ENCODE measurements at regions of chr5 and their contacts with region 1.

Region 1: GRCh38 chr5:79464695-79465332 is 49.1 kb downstream of the HOMER1 start:
- DNase-seq: peak in 1 of 4 donors; percentile 15
- ATAC-seq: peak; percentile 83
- H3K4me3 ChIP-seq: no peak overlapping the region
- H3K27ac ChIP-seq: no peak overlapping the region
- H3K4me1 ChIP-seq: no peaks in the 10 kb centered on the region
- H3K27me3 ChIP-seq: no peaks in the 10 kb centered on the region
- CTCF ChIP-seq: peak; percentile 20 to 49

Region 2: DNA sequence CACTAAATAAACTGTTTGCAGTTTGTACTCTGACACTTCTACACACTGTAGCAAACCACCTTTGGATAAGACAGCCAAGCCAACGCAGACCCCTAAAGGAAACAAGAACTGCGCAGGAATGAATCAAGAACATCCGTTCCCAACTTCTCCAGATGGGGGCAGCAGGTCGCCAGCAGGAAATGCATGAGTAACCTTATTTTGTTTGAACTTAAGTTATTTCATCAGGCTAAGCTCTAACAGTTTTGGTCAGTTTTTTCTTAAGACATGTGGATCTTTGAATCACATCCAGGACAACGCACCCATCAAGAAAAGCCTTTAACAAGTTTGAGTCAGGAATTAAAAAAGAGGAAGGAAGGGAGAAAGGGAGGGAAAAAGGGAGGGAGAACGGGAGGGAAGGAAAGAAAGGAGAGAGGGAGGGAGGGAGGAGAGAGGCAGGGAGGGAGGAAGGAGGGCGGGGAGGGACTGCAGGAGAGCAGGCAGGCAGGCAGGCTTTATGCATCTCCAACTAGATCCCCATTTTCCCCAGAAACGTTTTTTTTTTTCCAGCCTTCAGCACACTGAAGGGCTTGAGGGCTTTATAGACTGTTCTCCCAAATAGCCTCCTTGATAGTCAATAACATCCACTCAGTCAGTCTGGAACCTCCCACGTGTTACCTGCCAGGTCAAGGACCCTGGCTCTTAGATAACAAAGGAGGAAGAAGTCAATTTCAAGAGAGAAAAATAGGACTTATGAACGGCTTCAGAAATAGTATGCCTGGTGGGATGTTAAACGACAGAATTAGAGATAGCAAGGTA is 331.0 kb before region 1 on chr5:
- intact Hi-C with region 1: loop called in 1 of 2 experiments (anchors 10 kb)
- DNase-seq: peak in 3 of 4 donors; percentile 45 to 79 (median 71)
- ATAC-seq: peak; percentile 95
- H3K4me3 ChIP-seq: peak overlapping the region in 1 of 2 donors; percentile 7
- H3K27ac ChIP-seq: peak overlapping the region in 1 of 2 donors; percentile 18
- H3K4me1 ChIP-seq: peaks cover 5 to 10% of the 10 kb centered on the region in 2 donors
- H3K27me3 ChIP-seq: no peaks in the 10 kb centered on the region
- CTCF ChIP-seq: peak in 1 of 2 donors; percentile 68

Region 3: DNA sequence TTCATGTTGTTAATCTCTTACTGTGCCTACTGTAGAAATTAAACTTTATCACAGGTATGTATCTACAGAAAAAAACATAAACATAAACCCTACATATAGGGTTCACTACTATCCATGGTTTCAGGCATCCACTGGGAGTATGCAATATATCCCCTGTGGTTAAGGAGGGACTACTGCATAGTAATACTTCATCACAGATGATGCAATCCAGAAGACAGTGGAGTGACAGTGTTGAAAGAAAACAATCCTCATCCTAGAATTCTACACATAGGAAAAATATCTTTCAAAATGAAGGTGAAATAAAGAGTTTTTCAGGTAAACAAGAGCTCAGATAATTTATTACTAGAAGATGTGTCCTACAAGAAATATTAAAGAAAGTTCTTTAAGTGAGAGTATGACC is 56.8 kb before region 1 on chr5:
- intact Hi-C with region 1: no loop called
- DNase-seq: no peak
- ATAC-seq: no peak
- H3K4me3 ChIP-seq: no peak overlapping the region
- H3K27ac ChIP-seq: no peak overlapping the region
- H3K4me1 ChIP-seq: no peaks in the 10 kb centered on the region
- H3K27me3 ChIP-seq: no peaks in the 10 kb centered on the region
- CTCF ChIP-seq: no peak